Heart right ventricle (tissue), 16 donors: ENCODE measurements at regions of chr20 and their contacts with region 1.

Region 1: GRCh38 chr20:58571693-58572427 is 56.7 kb upstream of the APCDD1L start:
- DNase-seq: no peak
- ATAC-seq: peak in 1 of 8 donors; percentile 19
- H3K4me3 ChIP-seq: no peak overlapping the region
- H3K27ac ChIP-seq: no peak overlapping the region
- H3K4me1 ChIP-seq: peaks cover 0 to 15% (median 0%) of the 10 kb centered on the region in 9 donors
- H3K27me3 ChIP-seq: peaks cover 0 to 23% (median 6%) of the 10 kb centered on the region in 7 donors
- CTCF ChIP-seq: no peak

Region 2: DNA sequence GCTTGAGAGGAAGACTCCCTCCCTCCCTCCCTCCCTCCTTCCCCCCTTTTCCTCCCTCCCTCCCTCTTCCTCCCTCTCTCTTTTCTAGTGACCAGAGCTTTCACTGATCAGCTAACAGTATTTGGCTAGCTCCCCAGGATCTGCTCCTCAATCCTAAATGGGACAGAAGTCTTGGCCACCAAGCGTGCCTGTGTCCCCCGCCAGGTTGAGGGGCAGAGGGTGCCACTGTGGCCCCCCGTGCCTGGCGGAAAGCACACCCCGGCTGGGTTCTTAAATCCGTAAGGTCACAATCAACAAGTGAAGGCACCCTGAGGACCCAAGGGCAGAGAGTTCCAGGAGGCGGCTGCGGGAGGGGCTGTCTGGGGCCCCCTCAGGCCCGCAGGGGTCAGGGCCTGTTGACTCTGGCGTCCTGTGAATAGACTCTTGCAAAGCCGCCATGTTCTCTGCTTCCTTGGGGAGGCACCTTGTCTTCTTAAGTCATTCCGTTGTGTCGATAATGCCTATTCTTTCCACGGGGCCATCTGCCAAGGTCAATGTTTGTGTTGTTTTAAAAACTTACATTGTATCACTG is 40.3 kb after region 1 on chr20:
- intact Hi-C with region 1: no loop called
- DNase-seq: peak in 1 of 2 donors; percentile 51
- ATAC-seq: peak in 5 of 8 donors; percentile 45 to 79 (median 55)
- H3K4me3 ChIP-seq: no peak overlapping the region
- H3K27ac ChIP-seq: no peak overlapping the region
- H3K4me1 ChIP-seq: peaks cover 0 to 18% (median 6%) of the 10 kb centered on the region in 9 donors
- H3K27me3 ChIP-seq: no peaks in the 10 kb centered on the region
- CTCF ChIP-seq: no peak

Region 3: DNA sequence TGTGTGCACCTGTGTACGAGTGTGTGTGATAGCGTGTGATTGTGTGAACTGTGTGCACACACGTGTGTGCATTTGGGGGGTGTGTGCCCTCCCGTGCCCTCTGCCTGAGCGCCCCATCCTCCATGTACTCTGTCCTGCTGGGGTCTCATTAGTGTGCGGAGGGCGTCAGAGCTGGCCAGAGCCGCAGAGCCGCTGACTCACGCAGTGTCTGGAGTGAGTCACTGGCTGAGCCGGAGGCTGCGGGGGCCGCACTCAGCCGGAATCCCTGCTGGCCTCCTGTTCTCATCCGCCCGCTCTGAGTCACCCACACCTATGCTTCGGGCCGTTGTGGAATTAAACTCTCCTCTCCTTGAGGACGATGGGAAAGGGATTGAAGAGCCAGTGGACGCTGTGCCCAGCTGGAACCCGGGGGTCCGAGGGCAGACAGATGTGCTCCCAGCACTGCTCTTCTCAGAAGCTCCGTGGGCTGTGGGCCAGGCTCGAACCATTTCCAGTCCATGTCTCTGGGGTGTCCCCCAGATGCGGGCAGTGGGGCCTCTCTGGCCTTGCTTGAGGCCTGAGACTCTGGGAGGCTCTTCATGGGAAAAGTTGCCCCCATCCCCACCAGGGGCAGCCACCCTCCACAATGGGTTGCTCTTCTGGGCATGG is 52.1 kb after region 1 on chr20:
- intact Hi-C with region 1: loop called in 1 of 10 experiments (anchors 10 kb)
- DNase-seq: peak; percentile 33 to 59
- ATAC-seq: peak; percentile 82 to 94 (median 85)
- H3K4me3 ChIP-seq: no peak overlapping the region
- H3K27ac ChIP-seq: peak overlapping the region in 2 of 10 donors; percentile 56 to 78
- H3K4me1 ChIP-seq: peaks cover 0 to 8% (median 0%) of the 10 kb centered on the region in 9 donors
- H3K27me3 ChIP-seq: peaks cover 0 to 19% (median 6%) of the 10 kb centered on the region in 7 donors
- CTCF ChIP-seq: no peak

Region 4: GRCh38 chr20:58634521-58635278 is 62.8 kb after region 1 on chr20:
- intact Hi-C with region 1: loop called in 3 of 10 experiments (anchors 5 to 10 kb)
- DNase-seq: no peak
- ATAC-seq: peak in 2 of 8 donors; percentile 9 to 43
- H3K4me3 ChIP-seq: no peak overlapping the region
- H3K27ac ChIP-seq: no peak overlapping the region
- H3K4me1 ChIP-seq: peaks cover 0 to 9% (median 0%) of the 10 kb centered on the region in 9 donors
- H3K27me3 ChIP-seq: peaks cover 0 to 31% (median 5%) of the 10 kb centered on the region in 7 donors
- CTCF ChIP-seq: no peak